ENCODE measurements at regions of chr2 and their contacts with region 1.

Region 1: DNA sequence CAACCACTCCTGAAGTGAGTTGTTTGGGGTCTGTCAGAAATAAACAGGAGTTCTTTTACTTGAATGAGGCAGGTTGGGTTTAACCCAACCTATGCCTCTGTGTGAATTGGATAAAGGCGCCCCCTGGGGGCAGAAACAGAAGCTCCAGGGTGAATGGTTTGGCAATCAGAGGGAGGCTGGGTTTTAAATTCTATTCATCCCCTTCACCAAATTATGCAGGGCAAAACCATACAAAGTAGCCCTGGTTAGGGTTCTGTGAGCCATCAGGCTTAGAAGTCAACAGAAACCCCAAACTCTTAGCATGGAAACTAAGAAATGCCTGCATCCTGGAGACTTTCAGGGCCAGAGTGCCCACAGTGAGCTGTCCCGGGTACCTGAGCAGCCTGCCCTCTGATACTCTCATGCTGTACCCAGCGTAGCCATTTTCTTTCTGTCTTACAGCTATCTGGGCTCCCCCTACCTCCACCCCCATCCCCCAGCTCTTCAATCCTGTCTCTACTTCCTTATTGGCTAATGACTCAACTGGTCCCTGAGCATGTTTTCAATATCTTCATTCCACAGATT is 241.5 kb downstream of the ICOS start:
- DNase-seq: peak; percentile 73
- ATAC-seq: peak; percentile 81
- H3K4me3 Mint-ChIP-seq: no peak overlapping the region
- H3K27ac Mint-ChIP-seq: no peak overlapping the region
- H3K4me1 Mint-ChIP-seq: no peaks in the 10 kb centered on the region
- H3K27me3 Mint-ChIP-seq: peaks cover 19% of the 10 kb centered on the region

Region 2: GRCh38 chr2:204072443-204073324 is 105.4 kb before region 1 on chr2:
- CTCF ChIA-PET with region 1: interaction called, 38 read pairs
- POLR2A ChIA-PET with region 1: no interaction called
- DNase-seq: peak; percentile 71
- ATAC-seq: peak; percentile 80
- H3K4me3 Mint-ChIP-seq: no peak overlapping the region
- H3K27ac Mint-ChIP-seq: no peak overlapping the region
- H3K4me1 Mint-ChIP-seq: no peaks in the 10 kb centered on the region
- H3K27me3 Mint-ChIP-seq: peaks cover 2% of the 10 kb centered on the region

Region 3: DNA sequence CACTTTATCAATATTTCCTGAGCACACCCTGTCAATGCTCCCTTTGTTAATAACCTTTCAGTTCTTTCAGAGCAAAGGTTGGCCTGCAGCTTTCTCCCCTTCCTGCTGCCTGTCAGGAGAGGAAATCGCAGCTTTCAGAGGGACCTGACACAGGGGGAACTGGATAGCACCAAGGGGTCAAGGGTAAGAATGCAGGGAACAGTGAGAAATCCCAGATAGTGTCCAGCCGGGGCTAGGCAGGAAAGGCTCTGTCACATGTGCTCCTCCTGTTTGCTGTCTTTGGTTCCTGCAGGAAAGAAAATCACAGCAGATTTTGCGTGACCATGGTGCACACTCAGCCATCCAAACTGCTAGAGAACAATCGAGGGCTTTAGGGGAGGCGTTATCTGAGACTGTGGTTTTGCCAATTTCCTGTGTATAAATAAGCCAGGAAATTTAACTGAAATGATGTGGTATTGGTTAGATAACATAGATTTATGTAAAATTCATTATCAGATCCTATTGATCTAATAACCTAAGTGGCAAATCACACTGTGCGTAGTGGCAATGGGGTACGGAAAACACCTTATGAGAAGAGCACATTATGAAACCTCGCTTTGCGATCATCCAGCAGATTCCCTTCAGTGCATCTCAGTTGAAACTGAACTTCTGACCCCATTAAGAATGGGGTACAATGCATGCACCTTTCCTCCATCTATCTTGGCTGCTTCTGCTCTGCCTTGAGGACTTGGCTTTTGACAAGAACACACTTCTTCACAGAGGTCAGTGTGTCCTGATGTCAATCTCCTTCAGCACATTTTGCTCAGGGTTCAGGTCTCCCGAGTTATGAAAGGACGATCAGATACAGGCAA is 63.5 kb before region 1 on chr2:
- CTCF ChIA-PET with region 1: interaction called, 69 read pairs
- POLR2A ChIA-PET with region 1: no interaction called
- DNase-seq: no peak
- ATAC-seq: no peak
- H3K4me3 Mint-ChIP-seq: no peak overlapping the region
- H3K27ac Mint-ChIP-seq: no peak overlapping the region
- H3K4me1 Mint-ChIP-seq: peaks cover 36% of the 10 kb centered on the region
- H3K27me3 Mint-ChIP-seq: peaks cover 20% of the 10 kb centered on the region

Region 4: DNA sequence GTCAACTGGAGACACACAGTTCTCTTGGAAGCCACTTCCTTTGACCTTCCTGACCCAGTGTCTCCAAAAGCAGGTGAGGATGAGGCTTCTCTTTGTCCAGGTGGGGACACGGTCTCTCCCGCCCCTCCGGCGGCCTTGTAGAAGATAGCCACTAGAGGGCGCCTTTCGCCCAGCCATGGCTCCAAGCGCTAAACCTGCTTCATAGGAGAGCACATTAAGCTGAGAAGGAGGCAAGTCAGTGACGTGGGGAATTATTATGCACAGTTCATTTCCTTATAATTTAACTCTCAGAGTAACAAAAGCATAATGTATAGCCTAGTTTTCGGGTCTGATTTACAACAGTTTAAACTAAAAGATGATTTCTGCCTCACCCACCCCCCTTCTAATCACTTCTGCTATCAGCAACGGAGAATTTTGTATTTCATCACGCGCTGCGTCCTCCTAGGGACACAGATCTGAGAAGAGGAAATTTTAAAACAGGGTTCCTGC is 32.8 kb before region 1 on chr2:
- CTCF ChIA-PET with region 1: interaction called, 65 read pairs
- POLR2A ChIA-PET with region 1: no interaction called
- DNase-seq: peak; percentile 87
- ATAC-seq: peak; percentile 99
- H3K4me3 Mint-ChIP-seq: peak overlapping the region; percentile 78
- H3K27ac Mint-ChIP-seq: peak overlapping the region; percentile 79
- H3K4me1 Mint-ChIP-seq: peaks cover 7% of the 10 kb centered on the region
- H3K27me3 Mint-ChIP-seq: peaks cover 21% of the 10 kb centered on the region

Region 5: GRCh38 chr2:204191574-204192335 is 13.7 kb after region 1 on chr2:
- CTCF ChIA-PET with region 1: interaction called, 10 read pairs
- POLR2A ChIA-PET with region 1: no interaction called
- DNase-seq: no peak
- ATAC-seq: no peak
- H3K4me3 Mint-ChIP-seq: no peak overlapping the region
- H3K27ac Mint-ChIP-seq: no peak overlapping the region
- H3K4me1 Mint-ChIP-seq: peaks cover 10% of the 10 kb centered on the region
- H3K27me3 Mint-ChIP-seq: peaks cover 25% of the 10 kb centered on the region

Region 6: DNA sequence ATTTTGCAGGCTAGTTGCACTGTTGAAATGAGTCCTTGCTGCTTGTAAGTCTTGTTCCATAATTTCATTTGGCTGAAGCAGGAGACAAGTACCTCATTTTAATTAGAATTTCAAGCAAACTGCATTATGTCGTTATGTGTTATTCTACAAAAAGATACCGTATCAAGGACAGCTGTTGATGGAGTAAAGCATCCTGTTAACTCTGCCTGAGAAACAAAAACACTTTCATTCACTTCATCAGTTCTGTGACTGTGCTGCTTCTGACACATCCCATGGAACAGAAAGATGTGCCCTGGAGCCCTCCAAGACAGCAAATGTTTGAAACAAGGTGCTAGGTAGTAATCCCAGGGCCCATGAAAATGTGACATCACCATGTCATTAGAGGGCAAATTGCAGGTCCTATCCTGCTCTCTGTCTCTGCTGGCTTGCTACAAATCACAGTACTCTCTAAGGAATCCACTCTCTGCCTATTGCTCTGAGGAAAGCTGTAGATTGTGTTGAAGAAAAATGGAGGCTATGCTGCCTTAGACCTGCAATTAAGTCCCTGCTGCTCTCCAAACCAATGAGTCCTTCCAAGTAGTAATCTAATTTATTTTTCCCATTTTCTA is 157.5 kb after region 1 on chr2:
- CTCF ChIA-PET with region 1: no interaction called
- POLR2A ChIA-PET with region 1: no interaction called
- DNase-seq: no peak
- ATAC-seq: no peak
- H3K4me3 Mint-ChIP-seq: no peak overlapping the region
- H3K27ac Mint-ChIP-seq: no peak overlapping the region
- H3K4me1 Mint-ChIP-seq: no peaks in the 10 kb centered on the region
- H3K27me3 Mint-ChIP-seq: peaks cover 18% of the 10 kb centered on the region